Lower leg skin (tissue), 4 donors: ENCODE measurements at regions of chr2 and their contacts with region 1.

Region 1: DNA sequence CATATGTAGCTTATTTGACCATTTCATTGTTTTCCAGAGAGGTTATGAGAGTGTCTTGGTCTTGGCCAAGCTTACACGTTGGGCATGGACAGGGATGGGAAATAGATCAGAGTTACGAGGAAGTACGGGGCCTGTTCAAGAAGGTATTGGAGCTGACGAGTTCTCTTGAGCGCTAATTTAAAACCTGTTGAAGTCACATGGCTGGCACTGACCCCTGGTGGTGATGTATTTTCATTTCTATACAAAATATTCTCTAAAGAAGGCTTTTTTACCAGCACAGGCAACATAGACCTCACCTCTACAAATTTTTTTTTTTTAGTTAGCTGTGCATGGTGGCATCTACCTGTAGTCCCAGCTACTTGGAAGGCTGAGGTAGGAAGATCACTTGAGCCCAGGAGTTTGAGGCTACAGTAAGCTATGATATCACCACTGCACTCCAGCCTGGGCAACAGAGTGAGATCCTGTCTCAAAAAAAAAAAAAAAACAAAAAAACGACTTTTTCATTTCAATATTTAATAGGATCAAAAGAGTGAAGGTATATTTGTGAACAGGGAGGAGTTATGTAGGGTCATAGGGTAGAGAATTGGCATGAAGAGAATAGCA is 19.6 kb downstream of the UGP2 start:
- DNase-seq: peak in 1 of 2 donors; percentile 55
- H3K4me3 ChIP-seq: no peak overlapping the region
- CTCF ChIP-seq: no peak
- POLR2A ChIP-seq: no peak

Region 2: GRCh38 chr2:63698825-63699548 is 162.3 kb before region 1 on chr2:
- intact Hi-C with region 1: loop called (anchors 10 kb)
- DNase-seq: peak; percentile 78 to 89
- H3K4me3 ChIP-seq: no peak overlapping the region
- CTCF ChIP-seq: no peak
- POLR2A ChIP-seq: no peak

Region 3: DNA sequence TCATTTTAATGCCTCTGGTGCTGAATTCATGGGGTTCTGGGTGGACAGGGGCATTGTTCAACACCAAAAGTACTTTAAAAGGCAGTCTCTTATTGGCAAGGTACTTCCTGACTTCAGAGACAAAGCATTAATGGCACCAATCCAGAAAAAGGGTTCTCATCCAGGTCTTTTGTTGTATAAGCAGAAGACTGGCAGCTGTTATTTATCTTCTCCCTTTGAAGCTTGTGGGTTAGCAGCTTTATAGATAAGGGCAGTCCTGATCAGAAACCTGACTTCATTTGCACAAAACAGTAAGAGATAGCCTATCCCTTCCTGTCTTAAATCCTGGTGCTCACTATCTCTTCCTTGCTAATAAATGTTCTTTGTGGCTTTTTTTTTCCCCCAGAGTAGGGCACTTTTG is 89.1 kb after region 1 on chr2:
- intact Hi-C with region 1: no loop called
- DNase-seq: no peak
- H3K4me3 ChIP-seq: no peak overlapping the region
- CTCF ChIP-seq: no peak
- POLR2A ChIP-seq: no peak